ENCODE measurements at regions of chr1 and their contacts with region 1.

Region 1: GRCh38 chr1:165597883-165598675 is 33.0 kb upstream of the MGST3 start:
- DNase-seq: peak; percentile 95 to 99
- H3K4me3 ChIP-seq: peak overlapping the region; percentile 46 to 71
- H3K27ac ChIP-seq: peak overlapping the region; percentile 76 to 80
- H3K4me1 ChIP-seq: peaks cover 0 to 6% of the 10 kb centered on the region in 2 donors
- H3K27me3 ChIP-seq: no peaks in the 10 kb centered on the region
- CTCF ChIP-seq: no peak

Region 2: GRCh38 chr1:165369255-165369848 is 228.7 kb before region 1 on chr1:
- intact Hi-C with region 1: loop called (anchors 2 kb)
- DNase-seq: peak in 1 of 2 donors; percentile 70
- H3K4me3 ChIP-seq: no peak overlapping the region
- H3K27ac ChIP-seq: no peak overlapping the region
- H3K4me1 ChIP-seq: no peaks in the 10 kb centered on the region
- H3K27me3 ChIP-seq: no peaks in the 10 kb centered on the region
- CTCF ChIP-seq: peak; percentile 54 to 90 (median 89)

Region 3: DNA sequence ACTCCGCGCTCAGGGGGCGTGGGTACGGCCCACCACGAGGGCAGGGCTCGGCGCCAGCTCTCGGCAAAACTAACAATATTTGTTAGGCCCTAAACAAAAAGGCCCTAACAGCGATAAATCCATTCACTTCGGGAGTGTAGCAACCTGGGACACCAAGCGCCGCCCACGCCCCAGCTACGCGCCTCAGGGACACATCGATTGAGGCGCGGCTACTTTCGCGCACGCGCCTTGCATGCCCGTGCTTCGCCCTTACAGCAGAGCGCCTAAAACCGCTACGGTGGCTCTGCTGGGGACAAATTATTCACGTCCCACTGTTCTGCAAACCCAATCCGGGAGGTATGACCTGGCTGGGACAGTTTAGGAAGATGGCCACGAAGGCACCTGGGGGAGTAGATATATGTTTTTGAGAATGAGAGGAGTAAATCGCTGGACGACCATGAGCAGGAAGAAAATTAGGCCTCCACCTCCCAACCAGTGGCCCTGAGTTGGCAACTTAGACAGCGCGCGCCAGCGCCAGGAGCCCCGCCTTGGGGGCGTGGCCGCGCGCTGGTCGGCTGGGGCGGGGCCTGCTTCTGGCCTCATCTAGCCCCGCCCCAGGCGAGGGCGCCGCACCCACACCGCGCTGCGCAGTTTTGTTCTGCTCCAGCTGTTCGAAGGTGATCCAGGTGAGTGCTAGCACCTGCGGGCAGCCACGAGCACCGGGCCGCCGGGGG is 32.7 kb after region 1 on chr1 and contains the start of gene MGST3:
- intact Hi-C with region 1: loop called (anchors 1 kb)
- DNase-seq: peak; percentile 80 to 98
- H3K4me3 ChIP-seq: peak within 1 kb of the TSS; percentile 71 to 90
- H3K27ac ChIP-seq: peak within 1 kb of the TSS; percentile 90 to 91
- H3K4me1 ChIP-seq: peaks cover 3 to 20% of the 10 kb centered on the region in 2 donors
- H3K27me3 ChIP-seq: no peaks in the 10 kb centered on the region
- CTCF ChIP-seq: no peak
- total RNA-seq, gene MGST3: 177 TPM

Region 4: GRCh38 chr1:165768513-165769394 is 170.7 kb after region 1 on chr1 and contains the start of gene TMCO1:
- intact Hi-C with region 1: loop called (anchors 2 kb)
- DNase-seq: peak; percentile 90 to 99
- H3K4me3 ChIP-seq: peak within 1 kb of the TSS; percentile 86 to 93
- H3K27ac ChIP-seq: peak within 1 kb of the TSS; percentile 88 to 92
- H3K4me1 ChIP-seq: peaks cover 6 to 23% of the 10 kb centered on the region in 2 donors
- H3K27me3 ChIP-seq: no peaks in the 10 kb centered on the region
- CTCF ChIP-seq: peak in 1 of 3 experiments; percentile 8
- total RNA-seq, gene TMCO1: 9.9 TPM

Region 5: DNA sequence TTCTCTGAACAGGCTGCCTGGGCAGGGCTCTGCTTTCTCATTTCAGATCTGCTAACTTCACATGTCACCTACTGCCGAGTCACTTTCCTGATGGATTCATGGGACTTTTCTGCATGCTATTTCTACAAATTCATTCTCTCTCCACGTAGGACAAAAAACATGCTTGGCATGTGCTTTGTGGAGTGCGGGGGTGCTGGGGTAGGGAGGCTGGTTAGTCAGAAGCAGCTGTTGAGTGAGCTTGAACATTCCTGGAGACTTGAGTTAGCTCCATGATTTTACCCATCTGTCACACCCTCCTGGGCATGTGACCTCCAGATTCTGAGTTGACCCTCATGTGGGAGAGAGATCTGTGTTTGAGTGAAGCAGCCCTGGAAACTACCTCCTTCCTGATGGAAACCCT is 300.8 kb after region 1 on chr1:
- intact Hi-C with region 1: loop called (anchors 2 kb)
- DNase-seq: peak; percentile 65 to 91
- H3K4me3 ChIP-seq: no peak overlapping the region
- H3K27ac ChIP-seq: peak overlapping the region; percentile 93 to 95
- H3K4me1 ChIP-seq: peaks cover 21 to 47% of the 10 kb centered on the region in 2 donors
- H3K27me3 ChIP-seq: no peaks in the 10 kb centered on the region
- CTCF ChIP-seq: no peak

Region 6: DNA sequence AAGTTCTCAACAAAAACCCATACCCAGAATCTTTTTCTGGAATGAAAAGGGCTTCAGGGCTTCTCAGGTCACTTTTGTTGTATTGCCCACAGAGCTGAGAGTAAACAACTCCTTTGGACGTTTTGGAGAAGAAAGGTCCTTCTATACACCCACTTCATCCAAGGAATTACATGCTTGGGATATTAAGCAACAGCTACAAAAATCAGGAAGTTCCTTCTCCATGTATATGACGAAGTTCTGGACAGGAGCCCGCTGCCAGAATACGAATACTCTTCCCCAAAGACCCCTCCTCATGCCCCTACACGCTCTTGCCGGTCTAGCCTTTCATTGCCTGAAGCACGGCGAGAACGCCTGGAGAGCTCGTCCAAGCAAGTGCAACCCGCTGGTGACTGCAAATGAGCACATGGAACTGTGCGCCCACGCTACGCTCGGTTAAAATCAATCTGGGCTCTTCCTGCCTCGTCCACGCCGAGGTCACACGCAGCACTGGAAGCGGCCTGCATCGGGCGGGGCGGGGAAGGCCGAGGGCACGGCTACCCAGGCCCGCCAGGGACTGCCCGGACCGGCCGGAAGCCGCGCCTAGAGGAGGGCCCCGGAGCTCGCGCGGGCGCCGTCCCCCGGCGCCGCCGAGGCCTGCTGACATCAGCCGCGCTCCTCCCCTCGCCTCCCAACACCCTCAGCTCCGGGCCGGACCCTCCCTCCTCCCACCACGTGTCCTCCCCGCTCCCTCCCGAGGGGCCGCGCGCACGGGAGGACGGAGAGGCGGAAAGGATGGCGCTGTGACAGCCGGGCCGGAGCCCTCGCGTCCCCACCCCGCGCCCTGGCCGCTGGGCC is 1240.9 kb after region 1 on chr1 and contains the start of gene POGK:
- intact Hi-C with region 1: loop called (anchors 5 kb)
- DNase-seq: peak; percentile 66 to 95
- H3K4me3 ChIP-seq: peak within 1 kb of the TSS; percentile 74 to 80
- H3K27ac ChIP-seq: peak within 1 kb of the TSS; percentile 88 to 93
- H3K4me1 ChIP-seq: peaks cover 14 to 42% of the 10 kb centered on the region in 2 donors
- H3K27me3 ChIP-seq: no peaks in the 10 kb centered on the region
- CTCF ChIP-seq: no peak
- total RNA-seq, gene POGK: 10.2 TPM